ENCODE measurements at regions of chr5 and their contacts with region 1.

Region 1: GRCh38 chr5:78537821-78538220 is 110.8 kb downstream of the LHFPL2 start:
- DNase-seq: no peak
- ATAC-seq: peak; percentile 76

Region 2: GRCh38 chr5:77645158-77645994 is 892.4 kb before region 1 on chr5:
- intact Hi-C with region 1: no loop called
- DNase-seq: no peak
- ATAC-seq: peak; percentile 80

Region 3: GRCh38 chr5:78065663-78066062 is 472.2 kb before region 1 on chr5:
- intact Hi-C with region 1: no loop called
- DNase-seq: no peak
- ATAC-seq: no peak

Region 4: GRCh38 chr5:78964887-78965286 is 427.1 kb after region 1 on chr5:
- intact Hi-C with region 1: loop called (anchors 5 kb)
- DNase-seq: no peak
- ATAC-seq: peak; percentile 88

Measured in Right ventricle myocardium superior (tissue), 1 donor.